Colonic mucosa (tissue), 4 donors: ENCODE measurements at regions of chrX and their contacts with region 1.

Region 1: GRCh38 chrX:140057001-140057411 is 91.7 kb upstream of the CXorf66 start:
- DNase-seq: peak; percentile 69
- H3K4me3 ChIP-seq: no peak overlapping the region
- H3K27ac ChIP-seq: no peak overlapping the region
- H3K4me1 ChIP-seq: no peaks in the 10 kb centered on the region
- H3K27me3 ChIP-seq: no peaks in the 10 kb centered on the region
- CTCF ChIP-seq: peak; percentile 76

Region 2: DNA sequence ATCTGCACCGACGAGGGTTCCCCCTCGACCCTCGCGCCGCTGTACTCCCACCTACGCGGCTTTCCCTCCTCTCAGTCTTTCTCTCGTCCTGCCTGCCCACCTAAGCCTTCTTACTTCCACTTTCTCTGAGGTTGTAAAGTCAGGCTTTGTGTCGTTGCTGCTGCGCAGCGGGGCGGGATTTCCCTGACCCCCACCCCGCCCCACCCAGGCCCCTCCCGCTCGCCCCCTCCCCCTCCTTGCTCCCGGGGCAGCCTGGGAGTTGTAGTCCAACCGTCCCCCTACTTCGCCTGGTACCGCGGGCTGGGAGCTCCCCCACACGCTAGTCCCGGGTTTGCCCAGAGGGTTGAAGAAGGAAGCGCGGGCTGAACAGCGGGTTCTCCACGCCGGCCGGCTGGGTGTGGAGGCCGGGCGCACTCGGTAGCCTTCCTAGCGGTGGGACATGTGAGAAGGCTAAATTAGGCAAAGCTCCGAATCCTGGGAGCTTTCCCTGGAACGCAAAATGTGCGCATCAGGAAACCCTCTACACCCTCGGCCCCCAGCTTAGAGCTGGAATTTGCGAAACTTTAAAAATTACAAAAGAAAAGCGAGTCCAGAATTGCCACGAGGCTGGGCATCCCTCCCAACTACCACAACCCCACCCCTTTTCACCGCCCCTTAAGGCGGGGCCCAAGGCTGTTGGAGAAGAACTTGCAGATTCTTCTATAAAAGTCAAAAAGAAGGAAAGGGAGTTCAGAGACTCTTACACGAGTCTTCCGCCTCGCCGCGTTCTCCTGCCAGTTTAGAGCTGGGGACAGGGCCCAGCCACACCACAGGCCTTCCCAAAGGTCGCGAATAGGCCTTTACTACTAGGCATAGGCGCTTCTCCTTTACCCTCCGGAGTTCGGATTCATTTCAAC is 123.9 kb before region 1 on chrX and contains the start of gene ATP11C:
- intact Hi-C with region 1: no loop called
- DNase-seq: peak; percentile 85
- H3K4me3 ChIP-seq: peak within 1 kb of the TSS; percentile 61
- H3K27ac ChIP-seq: peak within 1 kb of the TSS; percentile 98
- H3K4me1 ChIP-seq: no peaks in the 10 kb centered on the region
- H3K27me3 ChIP-seq: no peaks in the 10 kb centered on the region
- CTCF ChIP-seq: no peak
- total RNA-seq, gene ATP11C: 9.1 to 15.3 TPM

Region 3: GRCh38 chrX:140180585-140180984 is 123.6 kb after region 1 on chrX:
- intact Hi-C with region 1: no loop called
- DNase-seq: no peak
- H3K4me3 ChIP-seq: no peak overlapping the region
- H3K27ac ChIP-seq: no peak overlapping the region
- H3K4me1 ChIP-seq: no peaks in the 10 kb centered on the region
- H3K27me3 ChIP-seq: no peaks in the 10 kb centered on the region
- CTCF ChIP-seq: no peak

Region 4: GRCh38 chrX:140733769-140734342 is 676.9 kb after region 1 on chrX:
- intact Hi-C with region 1: loop called (anchors 10 kb)
- DNase-seq: no peak
- H3K4me3 ChIP-seq: no peak overlapping the region
- H3K27ac ChIP-seq: no peak overlapping the region
- H3K4me1 ChIP-seq: no peaks in the 10 kb centered on the region
- H3K27me3 ChIP-seq: no peaks in the 10 kb centered on the region
- CTCF ChIP-seq: peak; percentile 56